Activated naive CD4-positive, alpha-beta T cell treated with anti-CD3 and anti-CD28 coated beads for 36 hours (primary cell): ENCODE measurements at regions of chr10 and their contacts with region 1.

Region 1: GRCh38 chr10:48656241-48656913 is 28.3 kb upstream of the WDFY4 start:
- DNase-seq: peak; percentile 91
- H3K4me3 Mint-ChIP-seq: peak overlapping the region; percentile 76
- H3K27ac Mint-ChIP-seq: no peak overlapping the region
- H3K4me1 Mint-ChIP-seq: peaks cover 4% of the 10 kb centered on the region
- H3K27me3 Mint-ChIP-seq: peaks cover 23% of the 10 kb centered on the region

Region 2: GRCh38 chr10:48215488-48216204 is 440.7 kb before region 1 on chr10:
- CTCF ChIA-PET with region 1: interaction called, 3 read pairs
- intact Hi-C with region 1: loop called (anchors 1 kb)
- DNase-seq: peak; percentile 62
- H3K4me3 Mint-ChIP-seq: no peak overlapping the region
- H3K27ac Mint-ChIP-seq: no peak overlapping the region
- H3K4me1 Mint-ChIP-seq: no peaks in the 10 kb centered on the region
- H3K27me3 Mint-ChIP-seq: peaks cover 7% of the 10 kb centered on the region

Region 3: GRCh38 chr10:48551861-48552591 is 104.4 kb before region 1 on chr10:
- CTCF ChIA-PET with region 1: interaction called, 102 read pairs
- intact Hi-C with region 1: loop called (anchors 1 kb)
- DNase-seq: peak; percentile 36
- H3K4me3 Mint-ChIP-seq: no peak overlapping the region
- H3K27ac Mint-ChIP-seq: no peak overlapping the region
- H3K4me1 Mint-ChIP-seq: no peaks in the 10 kb centered on the region
- H3K27me3 Mint-ChIP-seq: peaks cover under 1% of the 10 kb centered on the region

Region 4: DNA sequence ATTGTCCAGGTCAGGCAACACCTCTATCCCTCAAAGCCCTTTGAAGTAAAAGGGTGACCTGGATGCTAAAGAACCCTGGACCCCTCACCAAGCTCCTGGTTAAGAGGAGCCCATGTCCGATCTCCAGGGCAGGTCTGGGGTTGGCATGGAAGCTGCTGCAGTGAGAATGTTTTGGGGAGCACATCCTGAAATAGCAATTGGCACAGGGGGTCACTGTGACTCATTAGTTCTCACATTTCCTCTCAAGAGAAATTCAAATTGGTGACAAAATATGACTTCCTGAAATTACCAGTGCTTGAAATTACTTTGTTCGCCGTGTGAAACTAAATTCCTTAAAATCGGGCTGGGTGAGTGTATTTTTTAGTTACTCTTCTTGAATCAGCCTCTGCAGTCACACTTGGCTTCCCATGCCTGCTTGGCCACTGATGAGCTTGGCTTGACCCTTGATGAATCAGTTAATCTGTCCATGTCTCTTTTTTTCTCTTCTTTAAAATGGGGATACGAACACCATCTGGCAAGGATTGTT is 32.7 kb before region 1 on chr10:
- CTCF ChIA-PET with region 1: interaction called, 30 read pairs
- intact Hi-C with region 1: no loop called
- DNase-seq: no peak
- H3K4me3 Mint-ChIP-seq: no peak overlapping the region
- H3K27ac Mint-ChIP-seq: no peak overlapping the region
- H3K4me1 Mint-ChIP-seq: no peaks in the 10 kb centered on the region
- H3K27me3 Mint-ChIP-seq: peaks cover 25% of the 10 kb centered on the region

Region 5: GRCh38 chr10:49164559-49165188 is 508.3 kb after region 1 on chr10:
- CTCF ChIA-PET with region 1: interaction called, 8 read pairs
- intact Hi-C with region 1: loop called (anchors 1 kb)
- DNase-seq: peak; percentile 46
- H3K4me3 Mint-ChIP-seq: no peak overlapping the region
- H3K27ac Mint-ChIP-seq: no peak overlapping the region
- H3K4me1 Mint-ChIP-seq: no peaks in the 10 kb centered on the region
- H3K27me3 Mint-ChIP-seq: no peaks in the 10 kb centered on the region

Region 6: GRCh38 chr10:49518982-49519578 is 862.7 kb after region 1 on chr10:
- CTCF ChIA-PET with region 1: interaction called, 3 read pairs
- intact Hi-C with region 1: loop called (anchors 1 kb)
- DNase-seq: peak; percentile 30
- H3K4me3 Mint-ChIP-seq: no peak overlapping the region
- H3K27ac Mint-ChIP-seq: no peak overlapping the region
- H3K4me1 Mint-ChIP-seq: no peaks in the 10 kb centered on the region
- H3K27me3 Mint-ChIP-seq: no peaks in the 10 kb centered on the region